Heart left ventricle (tissue), 16 donors: ENCODE measurements at regions of chr5 and their contacts with region 1.

Region 1: DNA sequence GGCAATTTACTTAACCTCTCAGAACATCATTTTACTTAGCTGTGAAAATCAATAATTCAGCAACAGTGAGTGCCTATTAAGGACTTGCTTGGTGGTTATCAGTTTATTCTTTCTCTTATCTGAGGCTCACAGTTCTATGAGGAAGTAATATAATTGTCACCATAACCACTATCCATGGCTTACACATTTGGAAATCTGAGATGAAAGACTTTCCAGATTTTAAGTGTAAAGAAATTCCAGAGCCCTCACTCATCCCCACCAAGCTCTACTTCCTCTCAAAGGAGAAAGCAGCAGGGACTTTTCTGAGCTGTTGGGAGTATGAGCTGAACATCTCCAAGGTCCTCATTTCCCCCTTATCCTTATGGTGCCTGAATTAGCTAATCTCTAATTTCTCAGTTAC is 321.5 kb downstream of the FBXL7 start:
- DNase-seq: no peak
- ATAC-seq: no peak
- H3K4me3 ChIP-seq: no peak overlapping the region
- H3K27ac ChIP-seq: no peak overlapping the region
- H3K4me1 ChIP-seq: peaks cover 0 to 12% (median 4%) of the 10 kb centered on the region in 12 donors
- H3K27me3 ChIP-seq: no peaks in the 10 kb centered on the region
- CTCF ChIP-seq: no peak
- POLR2A ChIP-seq: no peak

Region 2: DNA sequence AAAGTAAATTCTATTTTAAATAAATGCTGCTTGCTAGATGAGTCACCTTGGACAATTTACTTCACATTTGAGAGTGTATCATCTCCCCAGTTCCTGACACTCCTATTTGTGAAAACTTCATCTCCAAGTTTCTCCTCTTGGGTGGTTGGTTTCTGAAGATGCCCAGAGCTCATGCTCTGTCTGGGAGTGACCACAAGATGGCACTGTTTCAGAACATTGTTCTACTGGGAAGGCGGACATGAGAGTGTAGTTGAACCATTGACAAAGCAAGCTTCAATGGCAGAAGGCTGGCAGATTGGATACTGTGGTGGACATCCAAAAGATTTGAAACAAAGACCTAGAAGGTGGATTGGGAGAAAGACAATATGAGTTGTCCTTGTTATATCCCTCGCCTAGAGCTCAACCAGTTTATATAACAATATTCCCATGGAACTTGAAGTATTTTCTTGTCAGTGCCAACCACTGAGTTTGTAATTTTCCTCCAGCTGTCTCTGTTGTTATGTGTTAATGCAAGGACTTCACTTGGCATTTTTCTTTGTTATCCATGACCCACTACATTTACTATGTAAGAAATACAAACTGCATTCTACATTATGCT is 715.6 kb before region 1 on chr5:
- intact Hi-C with region 1: loop called in 3 of 10 experiments (anchors 5 to 10 kb)
- DNase-seq: peak in 3 of 5 donors; percentile 18 to 28 (median 21)
- ATAC-seq: peak in 3 of 4 donors; percentile 66 to 77 (median 69)
- H3K4me3 ChIP-seq: no peak overlapping the region
- H3K27ac ChIP-seq: no peak overlapping the region
- H3K4me1 ChIP-seq: peaks cover 0 to 3% (median 0%) of the 10 kb centered on the region in 12 donors
- H3K27me3 ChIP-seq: no peaks in the 10 kb centered on the region
- CTCF ChIP-seq: peak; percentile 50 to 82 (median 68)
- POLR2A ChIP-seq: no peak

Region 3: GRCh38 chr5:15285901-15286583 is 535.5 kb before region 1 on chr5:
- intact Hi-C with region 1: loop called in 2 of 10 experiments (anchors 5 to 10 kb)
- DNase-seq: peak in 4 of 5 donors; percentile 25 to 43 (median 29)
- ATAC-seq: peak; percentile 9 to 91 (median 73)
- H3K4me3 ChIP-seq: no peak overlapping the region
- H3K27ac ChIP-seq: no peak overlapping the region
- H3K4me1 ChIP-seq: peaks cover 0 to 7% (median 0%) of the 10 kb centered on the region in 12 donors
- H3K27me3 ChIP-seq: no peaks in the 10 kb centered on the region
- CTCF ChIP-seq: no peak
- POLR2A ChIP-seq: no peak

Region 4: GRCh38 chr5:15383469-15383868 is 438.0 kb before region 1 on chr5:
- intact Hi-C with region 1: loop called in 1 of 10 experiments (anchors 10 kb)
- DNase-seq: no peak
- ATAC-seq: no peak
- H3K4me3 ChIP-seq: no peak overlapping the region
- H3K27ac ChIP-seq: no peak overlapping the region
- H3K4me1 ChIP-seq: no peaks in the 10 kb centered on the region
- H3K27me3 ChIP-seq: no peaks in the 10 kb centered on the region
- CTCF ChIP-seq: peak in 9 of 12 donors; percentile 13 to 54 (median 39)
- POLR2A ChIP-seq: no peak

Region 5: GRCh38 chr5:15463231-15463980 is 358.1 kb before region 1 on chr5:
- intact Hi-C with region 1: loop called in 3 of 10 experiments (anchors 5 kb)
- DNase-seq: no peak
- ATAC-seq: no peak
- H3K4me3 ChIP-seq: no peak overlapping the region
- H3K27ac ChIP-seq: no peak overlapping the region
- H3K4me1 ChIP-seq: no peaks in the 10 kb centered on the region
- H3K27me3 ChIP-seq: no peaks in the 10 kb centered on the region
- CTCF ChIP-seq: peak in 11 of 12 donors; percentile 13 to 58 (median 52)
- POLR2A ChIP-seq: no peak

Region 6: DNA sequence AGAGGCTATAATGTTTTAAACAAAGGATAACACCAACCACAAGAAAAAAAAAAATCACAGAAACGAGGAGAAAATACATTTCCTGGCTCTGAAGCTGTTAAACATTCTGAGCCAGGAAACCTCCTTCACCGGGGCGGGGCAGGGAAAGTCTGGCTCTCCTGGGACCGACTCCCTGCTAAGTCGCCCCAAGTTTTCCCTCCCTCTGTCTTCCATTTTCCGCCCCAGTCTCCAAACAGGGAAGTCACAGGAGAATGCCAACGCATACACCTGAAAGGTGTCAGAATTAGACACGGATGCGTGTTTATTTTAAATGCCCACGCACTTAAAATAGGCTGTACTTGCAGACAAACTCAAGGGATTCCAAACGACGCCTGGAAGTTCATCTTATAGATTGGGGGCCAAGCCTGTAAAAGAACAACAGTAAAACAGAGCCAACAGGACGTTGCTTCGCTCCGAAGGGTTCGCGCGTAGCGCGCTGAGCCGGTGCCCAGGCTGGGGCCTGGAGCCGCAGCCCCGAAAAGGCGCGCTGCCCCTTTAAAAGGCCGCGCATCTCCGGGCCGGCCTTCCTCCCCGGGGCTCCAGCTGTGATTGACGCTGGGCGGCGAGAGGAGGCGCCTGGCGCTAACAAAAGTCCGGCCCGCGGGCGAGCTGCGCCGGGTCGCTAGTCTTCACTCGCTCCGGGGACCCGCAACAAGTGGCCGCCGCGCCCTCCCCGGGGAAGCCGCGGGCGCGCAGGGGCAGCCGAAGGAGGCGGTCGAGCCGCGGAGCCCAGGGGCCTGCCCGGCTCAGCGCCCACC is 321.8 kb before region 1 on chr5 and contains the start of gene FBXL7:
- intact Hi-C with region 1: loop called in 5 of 10 experiments (anchors 5 to 10 kb)
- DNase-seq: peak; percentile 88 to 92 (median 89)
- ATAC-seq: peak; percentile 90 to 93 (median 91)
- H3K4me3 ChIP-seq: peak within 1 kb of the TSS; percentile 69 to 93 (median 81)
- H3K27ac ChIP-seq: peak within 1 kb of the TSS; percentile 83 to 96 (median 90)
- H3K4me1 ChIP-seq: peaks cover 3 to 38% (median 18%) of the 10 kb centered on the region in 12 donors
- H3K27me3 ChIP-seq: peaks cover 0 to 14% (median 0%) of the 10 kb centered on the region in 9 donors
- CTCF ChIP-seq: peak in 9 of 12 donors; percentile 9 to 55 (median 37)
- POLR2A ChIP-seq: peak in 1 of 2 donors; percentile 57
- total RNA-seq, gene FBXL7: 17.6 to 27.6 (median 24.5) TPM

Region 7: DNA sequence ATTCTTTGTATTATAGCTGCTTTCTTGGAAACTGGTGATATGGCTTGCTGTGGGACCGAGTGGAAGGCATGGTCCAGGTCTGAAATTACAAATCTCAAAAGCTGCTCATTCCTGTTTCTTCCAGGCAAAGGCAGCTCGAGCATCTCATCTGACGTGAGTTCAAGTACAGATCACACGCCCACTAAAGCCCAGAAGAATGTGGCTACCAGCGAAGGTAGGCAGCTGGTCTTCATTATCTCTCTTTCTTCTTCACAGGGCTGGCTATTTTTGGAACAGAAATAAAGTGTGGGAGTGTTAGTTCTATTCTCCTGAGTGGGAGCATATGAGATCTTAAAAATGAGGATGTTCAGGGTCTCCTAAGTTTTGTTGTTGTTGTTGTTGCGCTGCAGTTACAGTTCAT is 205.6 kb before region 1 on chr5:
- intact Hi-C with region 1: no loop called
- DNase-seq: no peak
- ATAC-seq: no peak
- H3K4me3 ChIP-seq: no peak overlapping the region
- H3K27ac ChIP-seq: no peak overlapping the region
- H3K4me1 ChIP-seq: peaks cover 0 to 13% (median 4%) of the 10 kb centered on the region in 12 donors
- H3K27me3 ChIP-seq: no peaks in the 10 kb centered on the region
- CTCF ChIP-seq: no peak
- POLR2A ChIP-seq: no peak

Region 8: GRCh38 chr5:15844253-15844652 is 22.7 kb after region 1 on chr5:
- intact Hi-C with region 1: no loop called
- DNase-seq: peak in 1 of 5 donors; percentile 38
- ATAC-seq: peak in 3 of 4 donors; percentile 49 to 70 (median 68)
- H3K4me3 ChIP-seq: no peak overlapping the region
- H3K27ac ChIP-seq: no peak overlapping the region
- H3K4me1 ChIP-seq: peaks cover 0 to 5% (median 0%) of the 10 kb centered on the region in 12 donors
- H3K27me3 ChIP-seq: no peaks in the 10 kb centered on the region
- CTCF ChIP-seq: no peak
- POLR2A ChIP-seq: no peak

Region 9: DNA sequence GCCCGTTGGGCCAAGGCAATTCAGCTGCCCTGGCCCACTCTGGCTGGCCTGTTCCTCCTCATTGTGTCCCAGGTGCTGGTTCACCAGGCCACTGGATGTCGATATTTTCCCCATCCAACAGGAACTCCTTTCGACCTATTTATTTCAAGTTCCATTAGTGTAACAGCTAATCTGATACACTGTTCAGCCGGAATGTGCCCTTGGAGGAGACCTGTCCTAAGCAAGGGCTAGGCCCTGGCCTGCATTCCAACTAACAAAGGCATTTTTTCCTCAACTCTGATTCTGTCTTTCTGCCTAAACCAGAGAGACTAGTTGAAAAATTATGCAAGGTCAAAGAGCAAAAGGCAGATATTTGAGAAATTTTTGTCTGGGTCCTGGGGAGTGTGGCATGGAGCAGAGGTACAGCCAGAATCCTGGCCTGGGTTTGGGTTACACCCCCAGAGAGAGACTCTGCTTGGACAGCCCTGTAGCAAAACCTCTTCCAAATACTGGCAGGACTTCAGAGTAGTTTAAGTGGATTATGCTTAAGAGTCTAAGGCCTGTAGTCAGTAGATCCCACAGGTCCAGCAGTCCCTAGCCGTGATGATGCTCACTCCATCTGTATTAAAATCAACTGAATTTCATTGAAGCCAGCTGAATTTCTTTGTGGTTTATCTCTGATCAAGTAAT is 322.0 kb after region 1 on chr5:
- intact Hi-C with region 1: no loop called
- DNase-seq: no peak
- ATAC-seq: peak; percentile 46 to 76 (median 64)
- H3K4me3 ChIP-seq: no peak overlapping the region
- H3K27ac ChIP-seq: peak overlapping the region; percentile 46 to 85 (median 70)
- H3K4me1 ChIP-seq: peaks cover 0 to 53% (median 7%) of the 10 kb centered on the region in 12 donors
- H3K27me3 ChIP-seq: no peaks in the 10 kb centered on the region
- CTCF ChIP-seq: no peak
- POLR2A ChIP-seq: no peak

Region 10: DNA sequence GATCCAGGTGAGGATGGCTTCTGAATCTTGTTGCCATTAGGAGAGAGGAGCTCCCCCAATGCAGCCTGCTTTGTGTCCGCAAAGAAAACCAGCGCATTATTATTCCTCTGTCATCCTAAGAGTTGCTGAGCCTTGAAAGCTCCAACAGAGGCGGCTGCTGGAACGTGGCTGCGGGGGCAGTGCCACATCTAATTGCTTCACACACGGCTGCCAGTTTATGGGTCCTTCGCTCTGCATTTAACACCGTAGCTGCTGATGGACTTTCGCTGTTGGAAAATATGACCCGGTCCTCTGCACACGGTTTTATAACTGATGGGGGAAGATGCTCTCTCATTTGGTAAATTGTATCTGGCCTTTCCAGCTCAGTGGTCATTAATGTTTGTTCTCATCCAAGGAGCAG is 606.1 kb after region 1 on chr5:
- intact Hi-C with region 1: no loop called
- DNase-seq: no peak
- ATAC-seq: no peak
- H3K4me3 ChIP-seq: no peak overlapping the region
- H3K27ac ChIP-seq: no peak overlapping the region
- H3K4me1 ChIP-seq: peaks cover 0 to 5% (median 0%) of the 10 kb centered on the region in 12 donors
- H3K27me3 ChIP-seq: no peaks in the 10 kb centered on the region
- CTCF ChIP-seq: no peak
- POLR2A ChIP-seq: no peak